Body of pancreas (tissue), 4 donors: ENCODE measurements at regions of chr1 and their contacts with region 1.

Region 1: DNA sequence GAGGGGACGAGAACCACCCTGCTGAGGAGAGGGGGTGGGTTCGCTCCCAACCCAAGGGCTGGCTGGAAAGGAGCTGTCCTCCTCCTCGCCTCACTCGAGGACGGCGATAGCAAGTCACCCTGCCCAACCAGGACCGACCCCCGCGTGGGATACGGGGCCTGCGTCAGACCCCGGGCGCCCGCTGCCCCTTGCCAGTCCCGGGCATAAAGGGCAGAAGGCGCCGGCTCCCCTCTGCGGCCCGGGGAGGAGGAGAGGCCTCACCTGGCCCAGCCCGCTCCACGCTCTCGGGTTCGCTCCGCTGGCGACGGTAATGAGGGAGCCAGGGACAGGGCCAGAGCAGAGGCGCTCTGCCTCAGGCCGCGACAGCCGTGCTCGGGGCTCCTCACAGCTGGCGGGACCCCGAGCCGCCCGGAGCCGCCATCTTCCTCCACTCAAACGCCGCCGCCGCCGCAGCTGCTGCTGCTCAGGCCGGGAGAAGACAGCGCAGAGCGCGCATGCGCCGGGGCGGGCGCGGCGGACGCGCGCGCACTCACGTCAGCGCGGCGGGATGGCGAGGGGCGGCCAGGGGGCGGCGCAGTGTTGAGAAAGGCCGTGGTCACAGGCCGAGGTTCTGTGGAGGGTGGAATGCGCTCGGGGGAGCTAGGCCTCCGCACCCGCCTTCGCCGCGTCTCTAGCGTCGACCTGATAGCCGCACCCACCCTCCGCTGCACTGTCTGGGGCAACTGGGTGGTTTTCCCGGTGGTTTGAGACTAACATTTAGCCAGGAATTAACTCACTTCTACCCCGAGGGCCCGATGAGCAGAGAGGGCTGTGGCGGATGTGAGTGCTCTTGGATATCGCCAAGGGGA is at the start of gene FBXO42:
- DNase-seq: peak; percentile 90 to 92 (median 92)
- ATAC-seq: peak; percentile 97
- H3K4me3 ChIP-seq: peak within 1 kb of the TSS; percentile 77 to 97
- H3K27ac ChIP-seq: peak within 1 kb of the TSS; percentile 88 to 95 (median 92)
- H3K4me1 ChIP-seq: peaks cover 27% of the 10 kb centered on the region
- H3K27me3 ChIP-seq: no peaks in the 10 kb centered on the region
- CTCF ChIP-seq: peak in 5 of 7 experiments; percentile 26 to 72 (median 45)
- POLR2A ChIP-seq: peak; percentile 89 to 90 (median 90)
- total RNA-seq, gene FBXO42: 11.9 to 33.6 TPM

Region 2: DNA sequence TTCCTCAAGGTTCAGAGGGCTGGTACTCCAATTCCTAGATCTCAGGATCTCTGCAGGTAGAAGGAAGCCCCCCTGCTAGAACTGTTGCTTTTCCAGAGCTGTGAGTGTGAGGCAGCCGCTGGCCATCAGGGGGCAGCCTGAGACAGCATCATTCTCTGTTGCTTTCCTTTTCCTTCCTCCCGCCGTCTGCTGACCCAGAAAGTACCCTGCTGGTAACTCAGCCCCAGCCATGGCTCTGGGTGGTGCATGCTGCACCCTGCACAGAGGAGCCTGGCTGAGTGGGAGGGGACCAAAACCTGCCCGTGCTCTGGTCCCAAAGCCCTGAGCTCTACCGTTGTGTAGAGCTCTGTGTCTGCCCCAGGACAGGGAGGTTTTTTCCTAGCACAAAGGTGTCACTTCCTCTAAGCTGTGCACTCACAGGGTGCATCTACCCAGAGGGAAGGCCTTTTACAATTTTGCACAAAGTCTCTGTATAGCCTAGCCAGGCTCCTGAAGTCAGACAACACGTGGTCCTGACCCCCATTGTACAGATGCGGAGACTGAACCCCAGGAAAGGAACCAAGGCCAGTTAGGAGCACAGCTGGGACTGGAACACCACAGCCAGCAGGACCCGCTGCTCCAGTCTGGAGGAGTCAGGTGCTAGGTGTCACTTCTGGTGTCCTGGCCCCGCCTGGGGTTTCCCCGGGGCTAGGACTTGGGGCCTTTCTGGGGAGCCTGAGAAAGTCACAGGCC is 273.1 kb before region 1 on chr1:
- intact Hi-C with region 1: loop called (anchors 10 kb)
- DNase-seq: peak; percentile 86 to 90 (median 86)
- ATAC-seq: peak; percentile 85
- H3K4me3 ChIP-seq: no peak overlapping the region
- H3K27ac ChIP-seq: peak overlapping the region in 2 of 4 donors; percentile 12 to 35
- H3K4me1 ChIP-seq: peaks cover 12% of the 10 kb centered on the region
- H3K27me3 ChIP-seq: no peaks in the 10 kb centered on the region
- CTCF ChIP-seq: peak; percentile 70 to 97 (median 94)
- POLR2A ChIP-seq: no peak

Region 3: GRCh38 chr1:16175610-16176553 is 176.3 kb before region 1 on chr1:
- intact Hi-C with region 1: no loop called
- DNase-seq: peak; percentile 87 to 95 (median 92)
- ATAC-seq: peak; percentile 84
- H3K4me3 ChIP-seq: no peak overlapping the region
- H3K27ac ChIP-seq: peak overlapping the region; percentile 50 to 88 (median 86)
- H3K4me1 ChIP-seq: peaks cover 67% of the 10 kb centered on the region
- H3K27me3 ChIP-seq: no peaks in the 10 kb centered on the region
- CTCF ChIP-seq: peak in 1 of 7 experiments; percentile 1
- POLR2A ChIP-seq: peak in 1 of 3 donors; percentile 10

Region 4: DNA sequence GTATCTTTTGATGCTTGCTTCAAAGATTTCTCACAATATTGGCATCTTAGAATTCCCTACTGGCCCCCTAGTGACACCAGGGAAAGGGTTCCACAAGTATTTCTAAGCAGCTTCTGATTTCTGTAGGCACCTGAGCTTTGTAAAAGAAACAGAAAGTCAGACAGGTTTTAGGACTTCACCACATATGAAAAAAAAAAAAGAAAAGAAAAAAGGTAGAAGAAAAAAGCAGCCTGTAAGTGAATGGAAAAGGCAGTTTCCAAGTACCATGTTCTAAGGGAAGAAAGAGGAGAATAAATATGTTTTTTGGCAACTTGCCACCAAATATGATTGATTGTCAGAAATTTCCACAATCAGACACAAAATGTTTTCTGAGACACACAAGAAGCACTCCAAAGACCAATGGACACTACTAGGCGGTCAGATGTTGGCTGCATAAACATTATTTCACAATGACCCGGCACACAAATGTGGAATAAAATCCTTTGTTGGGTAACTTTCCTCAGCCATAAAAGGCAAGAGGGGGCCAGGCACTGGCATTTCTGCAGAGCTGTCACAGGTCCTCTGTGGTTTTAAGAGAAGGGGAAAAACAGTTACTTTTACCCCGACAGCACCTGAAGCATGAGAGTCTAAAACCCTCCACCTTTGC is 102.5 kb before region 1 on chr1:
- intact Hi-C with region 1: loop called (anchors 10 kb)
- DNase-seq: peak in 3 of 4 donors; percentile 38 to 65 (median 49)
- ATAC-seq: peak; percentile 15
- H3K4me3 ChIP-seq: no peak overlapping the region
- H3K27ac ChIP-seq: peak overlapping the region in 3 of 4 donors; percentile 75 to 87 (median 83)
- H3K4me1 ChIP-seq: peaks cover 63% of the 10 kb centered on the region
- H3K27me3 ChIP-seq: no peaks in the 10 kb centered on the region
- CTCF ChIP-seq: no peak
- POLR2A ChIP-seq: no peak